Dendritic cell treated with granulocyte-macrophage colony-stimulating factor and Interleukin-4, amounts not matched to agents 40 ng/mL and 50 ng/mL, for 4 days (primary cell): ENCODE measurements at regions of chr18 and their contacts with region 1.

Region 1: DNA sequence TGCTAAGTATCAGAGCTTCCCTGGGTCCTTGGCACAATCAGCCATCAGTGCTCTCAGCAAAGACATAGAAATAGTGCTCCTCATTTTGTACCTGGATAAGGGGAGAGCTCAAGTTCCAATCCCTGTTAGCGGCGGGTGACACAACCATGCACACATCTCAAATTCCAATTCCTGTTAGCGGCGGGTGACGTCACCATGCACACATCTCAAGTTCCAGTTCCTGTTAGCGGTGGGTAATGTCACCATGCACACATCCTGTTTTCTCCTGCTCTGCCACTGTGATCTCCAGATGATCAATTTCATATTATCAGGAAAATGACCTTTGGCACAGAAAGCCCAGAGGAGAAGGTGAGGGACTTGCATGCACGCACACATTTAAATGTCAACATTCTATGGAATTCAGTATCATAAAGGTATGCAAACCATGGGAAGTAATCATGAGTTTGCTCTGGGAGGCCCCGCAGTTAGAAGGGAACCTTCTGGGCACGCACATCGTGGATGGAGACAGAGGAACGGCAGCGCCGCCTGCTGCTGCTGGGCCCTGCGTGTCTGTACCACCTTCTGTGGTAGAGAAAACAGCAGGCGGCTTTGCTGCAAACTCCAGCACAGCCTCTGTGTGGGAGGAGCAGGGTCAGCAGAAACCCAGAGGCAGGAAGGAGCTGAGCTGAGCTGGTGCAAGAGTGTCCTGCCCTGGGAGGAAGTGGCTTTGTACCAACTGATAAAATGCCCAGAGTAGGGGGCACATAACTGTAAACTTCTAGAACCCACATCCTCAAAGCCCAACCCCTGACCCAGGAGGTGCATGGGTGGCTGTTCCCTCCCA is 77.8 kb downstream of the MBP start:
- H3K4me3 Mint-ChIP-seq: peak overlapping the region; percentile 66
- H3K27ac Mint-ChIP-seq: peak overlapping the region; percentile 97
- H3K4me1 Mint-ChIP-seq: peaks cover 73% of the 10 kb centered on the region
- H3K27me3 Mint-ChIP-seq: no peaks in the 10 kb centered on the region

Region 2: GRCh38 chr18:76958692-76959341 is 96.0 kb before region 1 on chr18:
- intact Hi-C with region 1: no loop called
- H3K4me3 Mint-ChIP-seq: no peak overlapping the region
- H3K27ac Mint-ChIP-seq: no peak overlapping the region
- H3K4me1 Mint-ChIP-seq: peaks cover 11% of the 10 kb centered on the region
- H3K27me3 Mint-ChIP-seq: no peaks in the 10 kb centered on the region

Region 3: DNA sequence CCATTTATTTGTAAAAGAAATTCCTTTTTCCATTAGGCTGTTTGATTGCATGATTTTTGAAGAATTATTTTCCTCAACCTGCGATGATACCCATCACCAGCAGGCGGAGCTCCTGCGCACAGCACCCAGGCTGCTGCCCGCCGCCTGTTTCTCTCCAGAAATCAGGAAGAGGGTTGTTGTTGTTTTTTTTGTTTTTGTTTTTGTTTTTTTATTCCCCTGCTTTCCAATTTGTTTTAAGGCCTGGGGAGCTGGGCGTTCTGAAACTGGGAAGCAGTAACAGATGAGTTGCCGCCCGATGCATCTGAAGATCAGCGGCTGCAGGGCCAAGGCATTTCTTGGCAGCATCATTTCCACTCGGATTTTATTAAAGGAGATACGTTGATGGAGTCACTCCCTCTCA is 54.3 kb before region 1 on chr18:
- intact Hi-C with region 1: loop called (anchors 2 kb)
- H3K4me3 Mint-ChIP-seq: no peak overlapping the region
- H3K27ac Mint-ChIP-seq: peak overlapping the region; percentile 77
- H3K4me1 Mint-ChIP-seq: peaks cover 48% of the 10 kb centered on the region
- H3K27me3 Mint-ChIP-seq: no peaks in the 10 kb centered on the region

Region 4: DNA sequence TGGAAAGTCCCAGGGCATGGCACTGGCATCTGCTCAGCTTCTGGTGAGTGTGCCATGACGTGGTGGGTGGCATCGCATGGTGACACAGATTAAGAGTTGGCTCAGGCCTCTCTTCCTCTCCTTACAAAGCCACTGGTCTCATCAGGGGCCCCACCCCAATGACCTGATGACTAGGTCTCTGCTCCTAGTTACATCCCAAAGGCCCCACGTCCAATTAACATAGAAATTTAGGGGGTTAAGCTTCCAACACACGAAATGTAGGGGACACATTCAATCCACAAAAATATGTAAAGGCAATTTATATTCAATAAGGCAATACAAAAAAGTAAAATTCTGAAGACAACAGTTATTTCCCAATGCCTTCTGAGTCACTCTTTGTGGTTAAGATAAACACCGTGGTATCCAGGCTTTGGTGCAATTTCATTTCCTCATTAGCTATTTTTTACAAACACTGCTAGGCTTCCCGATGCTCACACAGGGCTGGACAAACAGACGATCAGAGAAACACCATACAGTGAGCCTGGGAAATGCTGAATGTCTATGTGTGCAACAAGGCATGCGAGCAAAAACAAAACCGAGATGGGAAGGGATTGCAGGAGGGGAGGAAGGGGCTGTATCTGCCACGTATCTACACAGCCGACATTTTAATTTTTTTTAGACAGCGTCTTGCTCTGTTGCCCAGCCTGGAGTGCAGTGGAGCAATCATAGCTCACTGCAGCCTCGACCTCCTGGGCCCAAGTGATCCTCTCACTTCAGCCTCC is 10.6 kb after region 1 on chr18:
- intact Hi-C with region 1: loop called (anchors 1 kb)
- H3K4me3 Mint-ChIP-seq: no peak overlapping the region
- H3K27ac Mint-ChIP-seq: peak overlapping the region; percentile 93
- H3K4me1 Mint-ChIP-seq: peaks cover 92% of the 10 kb centered on the region
- H3K27me3 Mint-ChIP-seq: no peaks in the 10 kb centered on the region